HEK293 (cell line): ENCODE measurements at regions of chr3 and their contacts with region 1.

Region 1: GRCh38 chr3:12891985-12892839 is 50.8 kb upstream of the RPL32 start:
- H3K4me3 ChIP-seq: no peak overlapping the region
- H3K27ac ChIP-seq: no peak overlapping the region
- H3K4me1 ChIP-seq: no peaks in the 10 kb centered on the region
- CTCF ChIP-seq: peak; percentile 94

Region 2: DNA sequence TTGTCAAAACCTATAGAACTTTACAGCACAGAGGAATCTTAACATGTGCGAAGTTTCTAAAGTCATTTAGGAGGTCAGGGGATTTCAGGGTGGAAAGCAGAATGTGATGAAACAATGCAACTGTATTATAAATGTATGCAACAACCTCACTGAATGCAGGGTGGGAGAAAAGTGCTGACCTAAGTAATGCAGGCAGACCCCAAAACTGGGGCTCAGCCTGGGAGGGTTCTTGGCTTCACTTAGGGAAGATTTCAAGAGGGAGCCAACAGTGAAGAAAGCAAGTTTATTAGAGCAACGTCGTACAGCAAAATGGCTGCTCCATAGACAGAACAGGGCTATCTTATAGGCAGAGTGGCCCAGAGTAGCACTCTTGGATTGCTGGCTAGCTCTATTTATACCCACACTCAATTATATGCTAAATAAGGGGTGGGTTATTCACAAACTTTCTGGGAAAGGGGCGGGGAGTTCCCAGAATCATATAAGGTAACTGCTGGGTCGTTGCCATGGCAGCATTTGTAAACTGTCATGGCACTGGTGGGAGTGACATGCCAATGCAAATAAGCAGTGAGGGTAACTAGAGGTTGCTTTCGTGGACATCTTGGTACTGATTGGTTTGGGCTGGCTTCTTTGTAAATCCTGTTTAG is 109.9 kb before region 1 on chr3:
- CTCF ChIA-PET with region 1: interaction called, 12 read pairs
- POLR2A ChIA-PET with region 1: no interaction called
- H3K4me3 ChIP-seq: no peak overlapping the region
- H3K27ac ChIP-seq: no peak overlapping the region
- H3K4me1 ChIP-seq: no peaks in the 10 kb centered on the region
- CTCF ChIP-seq: no peak

Region 3: GRCh38 chr3:12841149-12841970 is 50.9 kb before region 1 on chr3 and contains the start of gene RPL32:
- CTCF ChIA-PET with region 1: interaction called, 19 read pairs
- POLR2A ChIA-PET with region 1: no interaction called
- H3K4me3 ChIP-seq: peak within 1 kb of the TSS; percentile 93
- H3K27ac ChIP-seq: peak within 1 kb of the TSS; percentile 98
- H3K4me1 ChIP-seq: no peaks in the 10 kb centered on the region
- CTCF ChIP-seq: peak; percentile 56; the same call in 1 of the 2 replicates

Region 4: GRCh38 chr3:12868039-12869034 is 23.9 kb before region 1 on chr3:
- CTCF ChIA-PET with region 1: interaction called, 71 read pairs
- POLR2A ChIA-PET with region 1: no interaction called
- H3K4me3 ChIP-seq: no peak overlapping the region
- H3K27ac ChIP-seq: no peak overlapping the region
- H3K4me1 ChIP-seq: no peaks in the 10 kb centered on the region
- CTCF ChIP-seq: peak; percentile 81

Region 5: GRCh38 chr3:12879191-12879815 is 12.9 kb before region 1 on chr3:
- CTCF ChIA-PET with region 1: interaction called, 10 read pairs
- POLR2A ChIA-PET with region 1: interaction called, 3 read pairs
- H3K4me3 ChIP-seq: no peak overlapping the region
- H3K27ac ChIP-seq: no peak overlapping the region
- H3K4me1 ChIP-seq: no peaks in the 10 kb centered on the region
- CTCF ChIP-seq: no peak

Region 6: GRCh38 chr3:12984023-12984823 is 92.0 kb after region 1 on chr3:
- CTCF ChIA-PET with region 1: interaction called, 12 read pairs
- POLR2A ChIA-PET with region 1: no interaction called
- H3K4me3 ChIP-seq: no peak overlapping the region
- H3K27ac ChIP-seq: no peak overlapping the region
- H3K4me1 ChIP-seq: no peaks in the 10 kb centered on the region
- CTCF ChIP-seq: 0 out of 2 replicates have a peak, but pooled peaks have one; percentile 61